ENCODE measurements at regions of chr2 and their contacts with region 1.

Region 1: GRCh38 chr2:73575261-73575660 is 67.0 kb downstream of the NAT8 start:
- DNase-seq: no peak
- H3K27ac ChIP-seq: no peak overlapping the region
- CTCF ChIP-seq: no peak

Region 2: GRCh38 chr2:72630767-72631166 is 944.5 kb before region 1 on chr2:
- CTCF ChIA-PET with region 1: no interaction called
- POLR2A ChIA-PET with region 1: no interaction called
- DNase-seq: no peak
- H3K27ac ChIP-seq: no peak overlapping the region
- CTCF ChIP-seq: no peak

Region 3: DNA sequence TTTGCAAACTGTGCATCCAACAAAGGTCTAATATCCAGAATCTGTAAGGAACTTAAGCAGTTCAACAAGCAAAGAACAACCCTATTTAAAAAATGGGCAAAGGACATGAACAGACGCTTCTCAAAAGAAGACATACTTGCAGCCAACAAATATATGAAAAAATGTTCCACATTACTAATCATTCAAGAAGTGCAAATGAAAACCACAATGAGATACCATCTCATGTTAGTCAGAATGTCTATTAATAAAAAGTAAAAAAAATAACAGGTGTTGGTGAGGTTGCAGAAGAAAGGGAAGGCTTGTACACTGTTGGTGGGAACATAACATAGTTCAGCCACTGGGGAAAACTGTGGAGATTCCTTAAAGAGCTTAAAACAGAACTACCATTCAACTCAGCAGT is 59.2 kb before region 1 on chr2:
- CTCF ChIA-PET with region 1: interaction called, 10 read pairs
- POLR2A ChIA-PET with region 1: no interaction called
- DNase-seq: no peak
- H3K27ac ChIP-seq: no peak overlapping the region
- CTCF ChIP-seq: no peak